GM12878 (cell line): ENCODE measurements at regions of chrX and their contacts with region 1.

Region 1: DNA sequence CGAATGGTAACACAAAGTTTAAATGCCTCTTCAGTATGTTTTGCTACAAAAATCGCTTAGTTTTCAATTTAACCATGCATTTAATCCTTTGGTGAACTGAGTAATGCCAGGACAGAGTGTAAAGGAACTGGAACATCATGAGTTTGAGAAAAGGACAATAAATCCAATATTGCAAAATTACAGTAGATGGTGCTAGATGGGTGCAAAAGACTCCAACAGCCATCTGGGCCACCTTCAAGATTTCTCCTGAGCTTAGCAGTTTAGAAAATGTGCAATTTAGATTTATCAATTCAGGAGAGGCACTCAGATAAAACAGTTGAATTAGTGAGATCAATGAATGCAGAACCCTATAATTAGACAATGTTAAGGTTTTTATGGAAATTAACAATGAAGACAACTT is 33.2 kb upstream of the MID1IP1 start:
- DNase-seq: no peak
- ATAC-seq: peak; percentile 62
- H3K4me3 ChIP-seq: no peak overlapping the region
- H3K27ac ChIP-seq: no peak overlapping the region
- H3K4me1 ChIP-seq: no peaks in the 10 kb centered on the region
- H3K27me3 ChIP-seq: no peaks in the 10 kb centered on the region
- CTCF ChIP-seq: peak; percentile 30 to 57 (median 31); a peak in 4 of 6 replicates
- EP300 ChIP-seq: no peak
- POLR2A ChIP-seq: no peak
- RAD21 ChIP-seq: peak; percentile 72

Region 2: DNA sequence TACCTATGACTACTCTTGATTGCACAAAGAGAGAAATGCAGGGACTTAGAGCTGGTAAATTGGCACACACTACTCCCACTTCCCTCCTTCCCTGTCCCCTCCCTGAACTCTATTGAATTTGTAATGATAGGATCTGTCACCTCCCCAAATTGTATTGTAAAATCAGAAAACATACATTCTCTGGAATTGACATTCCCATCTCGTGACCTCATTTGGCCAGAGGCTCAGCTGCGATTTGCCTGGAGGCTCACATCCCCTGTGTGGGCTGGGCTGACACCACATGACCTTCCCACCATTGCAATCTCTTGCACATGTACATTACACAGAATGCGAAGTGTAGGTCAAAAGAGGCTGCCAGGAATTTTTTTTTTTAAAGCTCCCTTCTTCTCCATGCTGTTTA is 205.2 kb after region 1 on chrX:
- CTCF ChIA-PET with region 1: no interaction called
- POLR2A ChIA-PET with region 1: no interaction called
- RAD21 ChIA-PET with region 1: no interaction called
- SMC1A ChIA-PET with region 1: no interaction called
- in situ Hi-C with region 1: no loop called
- intact Hi-C with region 1: no loop called
- DNase-seq: no peak
- ATAC-seq: no peak
- H3K4me3 ChIP-seq: no peak overlapping the region
- H3K27ac ChIP-seq: no peak overlapping the region
- H3K4me1 ChIP-seq: no peaks in the 10 kb centered on the region
- H3K27me3 ChIP-seq: no peaks in the 10 kb centered on the region
- CTCF ChIP-seq: no peak
- EP300 ChIP-seq: no peak
- POLR2A ChIP-seq: no peak
- RAD21 ChIP-seq: no peak

Region 3: DNA sequence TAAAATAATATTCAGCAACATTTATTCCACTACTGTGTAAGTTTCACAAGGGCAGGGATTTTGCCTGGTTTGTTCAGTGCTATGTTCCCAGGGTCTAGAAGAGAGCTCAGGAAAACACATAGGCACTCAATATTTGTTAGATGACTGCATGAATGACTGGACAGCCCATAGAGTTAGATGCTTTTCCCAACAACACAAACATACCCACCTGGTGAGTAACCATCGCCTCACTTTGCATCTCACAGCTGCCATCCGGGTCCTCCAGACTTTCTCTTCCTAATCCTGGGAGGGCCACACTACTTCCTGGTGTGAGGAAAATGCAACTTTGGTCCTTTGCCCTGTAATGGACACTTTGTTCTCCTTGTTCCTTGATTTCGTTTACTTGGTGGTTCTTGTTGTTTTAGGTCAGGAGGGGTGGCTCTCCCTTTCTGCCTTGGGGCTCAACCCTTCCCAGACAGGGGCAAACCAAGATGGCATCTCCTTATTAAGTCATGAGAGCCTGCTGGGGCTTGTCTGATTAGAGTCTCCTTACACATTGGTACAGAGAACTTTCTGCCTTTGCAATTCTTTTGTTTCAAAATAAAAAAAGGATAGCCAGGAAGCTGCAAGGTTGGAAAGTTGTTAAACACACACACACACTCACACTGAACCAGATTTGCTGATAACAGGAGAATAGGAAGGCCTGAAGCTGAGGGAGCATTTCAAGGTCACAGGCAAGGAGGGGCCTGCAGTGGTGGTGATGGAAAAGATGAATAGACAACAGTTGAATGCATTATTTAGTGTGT is 223.8 kb after region 1 on chrX:
- CTCF ChIA-PET with region 1: interaction called, 23 read pairs
- POLR2A ChIA-PET with region 1: no interaction called
- RAD21 ChIA-PET with region 1: interaction called, 3 read pairs
- SMC1A ChIA-PET with region 1: interaction called, 8 read pairs
- in situ Hi-C with region 1: loop called (anchors 5 kb)
- intact Hi-C with region 1: no loop called
- DNase-seq: no peak
- ATAC-seq: no peak
- H3K4me3 ChIP-seq: no peak overlapping the region
- H3K27ac ChIP-seq: no peak overlapping the region
- H3K4me1 ChIP-seq: no peaks in the 10 kb centered on the region
- H3K27me3 ChIP-seq: no peaks in the 10 kb centered on the region
- CTCF ChIP-seq: no peak
- EP300 ChIP-seq: no peak
- POLR2A ChIP-seq: no peak
- RAD21 ChIP-seq: no peak